Activated T-helper 1 cell treated with anti-CD3 and anti-CD28 coated beads, Interleukin-12 subunit alpha, Interleukin-12 subunit beta, Interleukin-2, Interleukin-4 antibody, amounts not matched to agents 30 ng/mL and 10 ng/mL and 1 ng/mL, durations not matched to agents 14 hours and 24 hours and 36 hours (primary cell): ENCODE measurements at regions of chr5 and their contacts with region 1.

Region 1: GRCh38 chr5:39274398-39275085 is 55.2 kb upstream of the FYB1 start:
- DNase-seq: no peak
- H3K4me3 Mint-ChIP-seq: peak overlapping the region; percentile 82
- H3K27ac Mint-ChIP-seq: peak overlapping the region; percentile 95
- H3K4me1 Mint-ChIP-seq: peaks cover 41% of the 10 kb centered on the region
- H3K27me3 Mint-ChIP-seq: no peaks in the 10 kb centered on the region

Region 2: GRCh38 chr5:39256477-39257235 is 17.9 kb before region 1 on chr5:
- intact Hi-C with region 1: loop called (anchors 1 kb)
- DNase-seq: peak; percentile 24
- H3K4me3 Mint-ChIP-seq: no peak overlapping the region
- H3K27ac Mint-ChIP-seq: no peak overlapping the region
- H3K4me1 Mint-ChIP-seq: peaks cover 17% of the 10 kb centered on the region
- H3K27me3 Mint-ChIP-seq: peaks cover 2% of the 10 kb centered on the region